Dorsolateral prefrontal cortex (tissue), 120 donors: ENCODE measurements at regions of chr9 and their contacts with region 1.

Region 1: DNA sequence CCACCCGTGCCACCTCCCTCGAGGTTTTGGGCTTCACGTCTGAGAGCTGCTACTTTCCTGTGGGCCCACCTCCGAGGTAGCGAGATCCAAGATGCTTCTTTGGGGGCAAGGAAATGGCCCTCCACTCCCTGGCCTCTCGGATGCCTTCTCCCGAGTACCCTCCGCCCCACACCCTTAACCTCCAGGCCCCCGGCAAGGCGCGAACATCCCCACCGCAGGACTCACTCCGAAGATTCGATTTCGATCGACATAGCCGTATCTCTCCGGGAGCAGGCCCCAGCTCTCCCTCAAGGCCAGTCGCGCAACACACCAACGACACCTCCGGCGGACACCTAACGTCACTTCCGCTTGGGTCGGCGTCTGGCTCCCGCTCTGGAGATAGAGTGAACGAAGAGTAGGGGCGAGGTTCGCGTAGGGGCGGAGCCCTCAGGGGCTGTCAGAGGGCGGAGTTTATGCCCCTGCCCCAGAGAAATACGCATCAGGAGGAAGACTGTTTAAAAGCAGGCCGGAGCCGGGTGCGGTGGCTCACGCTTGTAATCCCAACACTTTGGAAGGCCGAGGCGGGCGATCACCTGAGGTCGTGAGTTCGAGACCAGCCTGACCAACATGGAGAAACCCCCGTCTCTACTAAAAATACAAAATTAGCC is at the start of gene SMU1:
- DNase-seq: peak; percentile 93 to 99 (median 97)
- H3K4me3 ChIP-seq: peak within 1 kb of the TSS; percentile 59 to 99 (median 88)
- H3K27ac ChIP-seq: peak within 1 kb of the TSS; percentile 47 to 97 (median 90)
- H3K27me3 ChIP-seq: no peaks in the 10 kb centered on the region
- CTCF ChIP-seq: peak in 13 of 56 donors; percentile 5 to 48 (median 21)
- total RNA-seq, gene SMU1: 17.9 to 30.7 (median 25.8) TPM

Region 2: DNA sequence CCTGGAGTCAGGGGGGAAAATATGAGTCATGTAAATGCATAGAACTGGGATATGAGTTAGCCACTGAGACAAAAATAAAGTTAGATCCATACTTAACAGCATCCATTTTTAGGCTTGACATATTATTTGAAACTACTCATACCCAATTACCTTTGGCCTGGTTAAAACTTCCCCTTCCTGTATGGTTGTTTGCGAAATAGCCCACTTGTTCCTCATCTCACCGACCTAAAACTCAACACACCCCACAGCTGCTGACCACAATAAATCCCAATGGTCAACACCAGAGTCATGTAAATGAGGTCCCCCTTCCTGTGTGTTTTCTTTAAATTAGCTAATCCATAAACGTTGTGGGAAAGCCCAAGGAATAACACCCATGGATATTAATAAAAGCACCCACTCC is 348.3 kb before region 1 on chr9:
- intact Hi-C with region 1: no loop called
- DNase-seq: no peak
- H3K4me3 ChIP-seq: no peak overlapping the region
- H3K27ac ChIP-seq: no peak overlapping the region
- H3K27me3 ChIP-seq: peaks cover 0 to 6% (median 0%) of the 10 kb centered on the region in 45 donors
- CTCF ChIP-seq: no peak

Region 3: GRCh38 chr9:33044127-33044673 is 32.3 kb before region 1 on chr9:
- intact Hi-C with region 1: loop called in 1 of 2 experiments (anchors 5 kb)
- DNase-seq: peak; percentile 52 to 91 (median 82)
- H3K4me3 ChIP-seq: peak overlapping the region; percentile 48 to 84 (median 69)
- H3K27ac ChIP-seq: peak overlapping the region in 58 of 59 donors; percentile 31 to 96 (median 91)
- H3K27me3 ChIP-seq: no peaks in the 10 kb centered on the region
- CTCF ChIP-seq: peak in 8 of 56 donors; percentile 1 to 24 (median 6)

Region 4: DNA sequence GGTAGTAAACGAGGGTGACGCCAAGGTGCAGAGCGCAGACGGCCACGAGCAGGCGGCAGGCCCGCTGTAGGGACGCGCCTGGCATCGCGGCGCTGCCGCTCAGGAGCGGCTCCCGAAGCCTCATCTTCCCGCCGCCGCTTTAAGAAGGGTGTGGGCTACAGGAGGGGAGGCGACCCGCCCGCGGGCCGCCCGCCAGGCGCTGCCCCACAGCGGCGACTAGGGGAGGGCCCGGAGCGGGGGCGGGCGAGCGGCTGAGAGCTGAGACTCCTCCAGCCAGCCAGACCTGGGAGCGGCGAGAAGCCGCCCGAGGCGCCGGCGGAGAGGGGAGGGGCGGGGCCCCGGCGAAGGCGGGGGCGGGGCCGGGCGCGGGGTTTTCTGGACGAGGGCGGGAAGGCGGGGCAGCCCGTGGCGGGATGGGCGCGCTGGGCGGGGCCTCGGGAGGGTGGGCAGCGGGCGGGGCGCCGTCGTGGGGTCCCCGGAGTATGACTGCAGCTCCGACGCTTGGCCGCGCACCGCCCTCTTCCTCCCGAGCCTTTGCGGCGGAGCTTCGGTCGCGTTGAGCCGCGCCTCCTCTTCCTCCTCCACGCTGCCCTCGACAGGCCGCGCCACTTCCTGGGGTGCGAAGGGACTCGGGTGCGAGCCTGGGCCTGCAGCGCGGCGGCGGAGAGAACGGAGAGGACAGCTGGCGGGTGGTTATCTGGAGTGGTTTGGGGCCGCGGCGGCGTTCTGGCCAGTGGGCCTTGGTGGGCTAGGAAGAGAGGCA is 90.7 kb after region 1 on chr9 and contains the start of gene B4GALT1:
- intact Hi-C with region 1: loop called (anchors 5 kb)
- DNase-seq: peak; percentile 64 to 89 (median 79)
- H3K4me3 ChIP-seq: peak within 1 kb of the TSS; percentile 57 to 92 (median 82)
- H3K27ac ChIP-seq: peak within 1 kb of the TSS; percentile 30 to 94 (median 84)
- H3K27me3 ChIP-seq: no peaks in the 10 kb centered on the region
- CTCF ChIP-seq: peak in 10 of 56 donors; percentile 2 to 34 (median 17)
- total RNA-seq, gene B4GALT1: 2.8 to 13.3 (median 6.0) TPM

Region 5: GRCh38 chr9:33225319-33226149 is 149.1 kb after region 1 on chr9:
- intact Hi-C with region 1: loop called (anchors 1 to 2 kb)
- DNase-seq: peak in 5 of 10 donors; percentile 30 to 80 (median 58)
- H3K4me3 ChIP-seq: peak overlapping the region in 1 of 59 donors; percentile 16
- H3K27ac ChIP-seq: no peak overlapping the region
- H3K27me3 ChIP-seq: peaks cover 0 to 4% (median 0%) of the 10 kb centered on the region in 45 donors
- CTCF ChIP-seq: peak; percentile 73 to 97 (median 89)

Region 6: GRCh38 chr9:33320568-33321261 is 244.2 kb after region 1 on chr9:
- intact Hi-C with region 1: no loop called
- DNase-seq: peak in 1 of 10 donors; percentile 29
- H3K4me3 ChIP-seq: no peak overlapping the region
- H3K27ac ChIP-seq: peak overlapping the region in 39 of 59 donors; percentile 5 to 78 (median 44)
- H3K27me3 ChIP-seq: no peaks in the 10 kb centered on the region
- CTCF ChIP-seq: no peak